H1 (cell line): ENCODE measurements at regions of chr2 and their contacts with region 1.

Region 1: GRCh38 chr2:42944779-42945415 is 152.5 kb upstream of the HAAO start:
- DNase-seq: no peak
- H3K4me3 ChIP-seq: no peak overlapping the region
- H3K27ac ChIP-seq: no peak overlapping the region
- H3K4me1 ChIP-seq: peaks cover 0 to 3% (median 0%) of the 10 kb centered on the region in 4 experiments; a peak in 3 of 7 replicates
- H3K27me3 ChIP-seq: no peaks in the 10 kb centered on the region
- CTCF ChIP-seq: no peak
- EP300 ChIP-seq: no peak
- POLR2A ChIP-seq: no peak
- RAD21 ChIP-seq: no peak

Region 2: GRCh38 chr2:42828487-42829425 is 116.1 kb before region 1 on chr2:
- CTCF ChIA-PET with region 1: interaction called, 43 read pairs
- POLR2A ChIA-PET with region 1: interaction called, 3 read pairs
- DNase-seq: peak; percentile 49 to 88
- H3K4me3 ChIP-seq: no peak overlapping the region
- H3K27ac ChIP-seq: no peak overlapping the region
- H3K4me1 ChIP-seq: no peaks in the 10 kb centered on the region; a peak in 2 of 7 replicates
- H3K27me3 ChIP-seq: peaks cover 0 to 9% (median 5%) of the 10 kb centered on the region in 4 experiments; a peak in 5 of 7 replicates
- CTCF ChIP-seq: peak; percentile 97 to 99 (median 98)
- EP300 ChIP-seq: no peak
- POLR2A ChIP-seq: no peak
- RAD21 ChIP-seq: peak; percentile 94 to 96

Region 3: DNA sequence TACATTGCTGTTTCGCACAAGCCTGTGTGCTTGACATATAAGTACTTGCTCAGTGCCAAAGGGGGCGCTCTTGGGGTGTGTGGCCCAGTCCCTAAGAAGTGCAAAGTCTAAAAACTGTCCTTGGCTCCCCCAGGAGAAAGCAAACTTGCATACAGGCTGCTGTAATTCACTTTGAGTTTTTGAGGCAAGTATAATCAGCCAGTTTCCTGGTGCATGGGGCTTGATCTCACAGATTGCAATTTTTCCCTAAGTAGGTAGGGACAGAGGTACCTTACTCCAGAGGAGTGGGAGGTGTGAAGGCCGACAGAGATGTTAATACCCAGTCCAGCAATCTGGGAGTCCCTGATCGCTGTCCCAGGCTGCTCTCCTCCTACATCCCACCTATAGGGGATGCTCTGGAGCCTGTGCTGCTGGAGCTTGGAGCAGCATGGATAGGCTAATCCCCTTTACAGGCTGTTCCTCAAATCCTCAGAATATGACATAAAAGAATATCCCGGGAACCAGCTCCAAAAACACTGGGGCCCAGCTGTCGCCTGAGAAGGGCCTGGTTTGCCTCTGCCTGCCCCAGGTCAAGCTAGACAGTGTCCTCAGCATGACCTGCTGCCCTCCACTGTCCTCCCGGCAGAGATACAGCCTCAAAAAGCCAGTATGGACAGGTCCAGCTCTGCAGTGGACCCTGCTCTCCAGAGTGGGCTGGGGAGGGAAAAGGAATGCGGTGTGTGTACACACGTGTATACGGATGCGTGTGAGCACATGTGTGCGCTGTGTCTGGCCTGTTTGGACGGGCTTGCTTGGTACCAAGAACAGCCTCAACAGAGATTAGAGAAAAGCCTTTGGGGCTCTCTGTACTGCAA is 16.0 kb before region 1 on chr2:
- CTCF ChIA-PET with region 1: interaction called, 217 read pairs
- POLR2A ChIA-PET with region 1: no interaction called
- DNase-seq: peak in 1 of 2 experiments; percentile 70
- H3K4me3 ChIP-seq: no peak overlapping the region; a peak in 1 of 8 replicates
- H3K27ac ChIP-seq: peak overlapping the region; percentile 56
- H3K4me1 ChIP-seq: peaks cover 29 to 49% (median 41%) of the 10 kb centered on the region in 4 experiments
- H3K27me3 ChIP-seq: no peaks in the 10 kb centered on the region
- CTCF ChIP-seq: peak in 2 of 3 experiments; percentile 69 to 77; a peak in 3 of 4 replicates
- EP300 ChIP-seq: no peak
- POLR2A ChIP-seq: no peak
- RAD21 ChIP-seq: peak; percentile 33 to 48; a peak in 3 of 4 replicates

Region 4: DNA sequence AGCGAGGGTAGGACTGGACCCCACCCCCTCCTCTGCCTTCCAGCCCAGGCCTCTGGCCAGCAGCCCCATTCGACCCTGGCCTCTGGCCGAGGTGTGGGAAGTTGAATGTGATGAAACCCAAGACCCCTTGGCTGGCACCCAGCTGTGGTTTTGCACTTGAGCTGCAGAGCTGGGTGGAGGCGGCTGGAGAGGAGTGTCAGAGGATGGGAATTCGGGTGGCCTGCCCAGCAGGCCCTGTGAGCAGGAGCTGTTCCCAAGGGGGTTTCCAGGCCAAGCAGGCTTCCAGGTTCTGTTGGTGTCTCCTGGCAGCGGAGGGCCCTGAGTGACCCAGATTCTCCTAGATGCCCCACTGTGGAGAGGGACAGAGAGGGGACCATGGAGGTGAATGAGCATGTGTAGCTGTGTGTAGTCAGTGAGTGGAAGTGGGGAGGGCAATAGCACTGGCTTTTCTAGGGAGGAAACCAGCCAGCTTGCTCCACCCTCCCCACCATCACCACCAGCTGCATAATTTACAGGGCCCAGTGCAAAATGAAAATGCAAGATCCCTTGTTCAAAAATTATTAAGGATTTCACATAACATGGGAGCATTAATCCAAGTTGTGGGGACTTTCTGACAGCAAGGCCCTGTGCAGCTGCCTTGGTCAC is 19.7 kb after region 1 on chr2:
- CTCF ChIA-PET with region 1: interaction called, 58 read pairs
- POLR2A ChIA-PET with region 1: no interaction called
- DNase-seq: no peak
- H3K4me3 ChIP-seq: no peak overlapping the region
- H3K27ac ChIP-seq: no peak overlapping the region
- H3K4me1 ChIP-seq: peaks cover 2 to 14% (median 8%) of the 10 kb centered on the region in 4 experiments
- H3K27me3 ChIP-seq: peaks cover 0 to 3% (median under 1%) of the 10 kb centered on the region in 4 experiments; a peak in 1 of 7 replicates
- CTCF ChIP-seq: no peak
- EP300 ChIP-seq: no peak
- POLR2A ChIP-seq: no peak
- RAD21 ChIP-seq: no peak

Region 5: GRCh38 chr2:43005245-43005974 is 60.5 kb after region 1 on chr2:
- CTCF ChIA-PET with region 1: interaction called, 18 read pairs
- POLR2A ChIA-PET with region 1: no interaction called
- DNase-seq: no peak
- H3K4me3 ChIP-seq: no peak overlapping the region
- H3K27ac ChIP-seq: no peak overlapping the region
- H3K4me1 ChIP-seq: peaks cover 0 to 3% (median 0%) of the 10 kb centered on the region in 4 experiments; a peak in 1 of 7 replicates
- H3K27me3 ChIP-seq: no peaks in the 10 kb centered on the region
- CTCF ChIP-seq: no peak
- EP300 ChIP-seq: no peak
- POLR2A ChIP-seq: no peak
- RAD21 ChIP-seq: no peak

Region 6: GRCh38 chr2:43018179-43019024 is 73.5 kb after region 1 on chr2:
- CTCF ChIA-PET with region 1: interaction called, 94 read pairs
- POLR2A ChIA-PET with region 1: no interaction called
- DNase-seq: no peak
- H3K4me3 ChIP-seq: no peak overlapping the region
- H3K27ac ChIP-seq: no peak overlapping the region
- H3K4me1 ChIP-seq: peaks cover 0 to 7% (median 4%) of the 10 kb centered on the region in 4 experiments; a peak in 4 of 7 replicates
- H3K27me3 ChIP-seq: no peaks in the 10 kb centered on the region
- CTCF ChIP-seq: no peak
- EP300 ChIP-seq: no peak
- POLR2A ChIP-seq: no peak
- RAD21 ChIP-seq: no peak

Region 7: GRCh38 chr2:43131024-43131889 is 186.4 kb after region 1 on chr2:
- CTCF ChIA-PET with region 1: interaction called, 40 read pairs
- POLR2A ChIA-PET with region 1: no interaction called
- DNase-seq: no peak
- H3K4me3 ChIP-seq: no peak overlapping the region
- H3K27ac ChIP-seq: no peak overlapping the region
- H3K4me1 ChIP-seq: peaks cover 0 to 14% (median 5%) of the 10 kb centered on the region in 4 experiments; a peak in 3 of 7 replicates
- H3K27me3 ChIP-seq: no peaks in the 10 kb centered on the region
- CTCF ChIP-seq: peak in 2 of 3 experiments; percentile 63 to 65; a peak in 3 of 4 replicates
- EP300 ChIP-seq: no peak
- POLR2A ChIP-seq: no peak
- RAD21 ChIP-seq: peak; percentile 83 to 86